GM10248 (cell line): ENCODE measurements at regions of chr2 and their contacts with region 1.

Region 1: DNA sequence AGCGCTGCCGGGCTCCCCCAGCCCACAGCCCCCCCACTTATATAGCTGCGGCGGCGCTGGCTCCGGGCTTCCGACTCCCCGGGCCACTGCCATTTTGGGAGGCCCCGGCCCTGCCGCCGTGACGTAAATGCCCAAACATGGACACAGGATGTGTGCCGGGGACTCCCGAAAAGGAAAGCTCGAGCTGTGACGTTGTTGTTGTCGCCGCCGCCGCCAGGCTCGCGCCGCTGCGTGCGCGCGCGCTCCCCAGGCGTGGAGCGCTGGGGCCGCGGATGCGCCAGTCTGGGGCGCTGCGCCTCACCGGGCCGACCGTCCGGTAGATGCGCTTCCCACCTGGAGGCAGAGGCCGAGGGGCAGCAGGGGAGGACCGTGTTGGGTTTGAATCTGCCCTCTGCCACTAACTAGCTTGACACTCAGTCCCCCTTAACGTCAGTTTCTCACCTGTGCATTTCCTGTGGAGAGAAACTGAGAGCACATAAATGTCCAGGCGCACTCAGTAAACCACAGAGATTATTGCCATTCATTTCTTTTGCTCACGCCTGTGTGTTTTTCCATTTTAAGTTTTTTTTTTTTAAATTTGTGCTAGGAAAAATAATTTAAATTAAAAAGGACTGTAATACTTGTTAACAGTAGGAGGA is at the start of gene EGR4:
- DNase-seq: peak; percentile 94
- CTCF ChIP-seq: no peak

Region 2: DNA sequence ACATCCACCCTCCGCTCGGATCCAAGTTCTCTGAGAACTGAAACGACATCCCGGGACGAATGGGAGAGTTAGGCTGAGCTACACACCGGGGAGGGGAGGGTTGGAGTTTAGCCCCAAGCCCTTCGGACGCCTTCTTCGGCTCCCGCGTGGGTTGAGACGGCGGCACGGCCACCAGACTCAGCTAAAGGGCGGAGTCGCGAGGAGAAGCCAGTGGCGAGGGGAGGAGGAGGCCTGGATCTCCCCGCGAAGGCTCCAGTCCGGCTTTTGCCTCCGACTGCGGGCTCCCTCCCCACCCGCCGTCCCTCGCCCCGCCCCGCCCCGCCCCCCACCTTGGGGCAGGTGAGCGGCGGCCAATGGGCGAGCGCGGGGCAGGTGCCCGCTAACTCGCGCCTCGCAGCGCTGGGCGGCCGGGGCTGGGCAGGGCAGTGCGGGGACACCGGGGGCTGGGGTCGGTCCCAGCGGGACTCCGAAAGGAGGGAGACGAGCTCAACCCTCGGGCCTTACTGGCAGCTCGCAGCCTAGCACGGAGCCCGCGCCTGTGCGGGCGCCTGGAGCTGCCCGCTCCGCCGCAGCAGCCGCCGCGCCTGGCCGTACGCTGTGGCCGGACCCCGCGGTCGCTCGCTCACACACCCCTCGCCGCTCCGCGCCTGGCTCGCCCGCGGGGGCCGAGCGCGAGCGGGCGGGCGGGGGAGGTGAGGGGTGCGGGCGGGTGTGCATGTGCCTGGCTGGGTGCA is 376.3 kb before region 1 on chr2 and contains the start of gene EMX1:
- CTCF ChIA-PET with region 1: no interaction called
- POLR2A ChIA-PET with region 1: no interaction called
- DNase-seq: peak; percentile 85
- CTCF ChIP-seq: no peak

Region 3: DNA sequence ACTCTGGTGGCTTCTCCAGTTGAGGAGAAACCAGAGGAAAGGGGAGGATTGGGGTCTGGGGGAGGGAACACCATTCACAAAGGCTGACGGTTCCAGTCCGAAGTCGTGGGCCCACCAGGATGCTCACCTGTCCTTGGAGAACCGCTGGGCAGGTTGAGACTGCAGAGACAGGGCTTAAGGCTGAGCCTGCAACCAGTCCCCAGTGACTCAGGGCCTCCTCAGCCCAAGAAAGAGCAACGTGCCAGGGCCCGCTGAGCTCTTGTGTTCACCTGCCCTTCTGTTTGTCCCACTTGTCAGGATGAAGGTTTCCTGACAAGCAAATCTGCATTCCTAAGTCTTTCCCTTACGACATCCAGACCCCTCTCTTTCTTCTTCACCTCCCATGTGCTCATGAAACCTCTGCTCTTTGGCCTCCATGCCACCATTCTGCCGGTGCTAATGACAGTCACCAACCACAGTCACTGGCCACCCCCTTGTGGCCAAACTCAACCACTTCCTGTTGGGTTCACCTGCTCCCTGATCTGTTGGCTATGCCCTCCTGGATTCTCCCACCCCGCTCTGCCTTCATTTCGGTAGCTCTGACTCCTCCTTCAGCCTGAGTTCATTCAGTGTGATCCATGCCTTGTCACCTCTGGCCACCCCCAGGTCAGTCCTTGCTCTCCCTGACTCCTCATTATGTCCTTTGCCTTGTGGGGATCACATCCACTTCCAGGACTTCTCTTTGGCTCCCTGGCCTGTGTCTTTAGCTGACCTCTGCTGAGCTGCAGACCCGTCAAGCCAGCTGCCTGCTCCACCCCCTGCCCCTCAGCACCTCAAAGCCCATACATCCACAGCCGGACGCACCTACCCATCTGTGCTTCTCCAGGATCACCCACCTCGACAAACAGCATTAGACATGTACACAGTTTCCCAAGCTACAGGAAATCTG is 358.7 kb before region 1 on chr2:
- CTCF ChIA-PET with region 1: no interaction called
- POLR2A ChIA-PET with region 1: no interaction called
- DNase-seq: peak; percentile 67
- CTCF ChIP-seq: peak; percentile 37

Region 4: DNA sequence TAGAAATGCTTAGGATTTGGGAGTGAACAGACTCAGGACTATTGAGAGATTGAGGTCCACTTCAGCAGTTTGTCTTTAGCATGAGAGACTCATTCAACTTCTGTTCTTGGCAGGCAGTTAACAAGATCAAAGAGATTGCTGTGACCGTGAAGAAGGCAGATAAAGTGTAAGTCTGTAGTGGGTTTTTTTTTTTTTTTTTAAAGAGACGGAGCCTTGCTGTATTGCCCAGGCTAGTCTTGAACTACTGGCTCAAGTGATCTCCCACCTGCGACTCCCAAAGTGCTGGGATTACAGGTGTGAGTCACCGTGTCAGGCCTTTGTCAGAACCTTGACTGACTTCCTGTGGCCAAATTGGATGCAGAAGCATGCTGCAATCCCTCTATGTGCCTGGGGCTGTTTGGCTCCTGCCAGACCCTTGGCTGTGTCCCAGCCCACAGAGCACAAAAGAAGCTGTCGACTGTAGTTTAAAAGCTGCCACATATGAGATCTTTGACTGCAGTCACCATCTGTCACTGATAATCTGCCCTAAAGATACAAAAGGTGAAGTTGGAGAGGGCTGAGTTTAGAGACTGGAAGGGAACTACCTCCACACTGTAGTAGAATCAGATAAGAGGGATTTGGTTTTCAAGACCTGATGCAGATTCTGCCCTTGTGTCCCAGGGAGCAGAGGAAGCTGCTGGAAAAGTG is 49.6 kb before region 1 on chr2:
- CTCF ChIA-PET with region 1: interaction called, 11 read pairs
- POLR2A ChIA-PET with region 1: no interaction called
- DNase-seq: no peak
- CTCF ChIP-seq: no peak

Region 5: GRCh38 chr2:73263540-73264333 is 29.9 kb before region 1 on chr2:
- CTCF ChIA-PET with region 1: interaction called, 15 read pairs
- POLR2A ChIA-PET with region 1: no interaction called
- DNase-seq: no peak
- CTCF ChIP-seq: no peak

Region 6: GRCh38 chr2:73282924-73283544 is 10.6 kb before region 1 on chr2:
- CTCF ChIA-PET with region 1: interaction called, 32 read pairs
- POLR2A ChIA-PET with region 1: no interaction called
- DNase-seq: no peak
- CTCF ChIP-seq: no peak

Region 7: GRCh38 chr2:73324126-73324725 is 30.6 kb after region 1 on chr2:
- CTCF ChIA-PET with region 1: interaction called, 18 read pairs
- POLR2A ChIA-PET with region 1: no interaction called
- DNase-seq: no peak
- CTCF ChIP-seq: no peak

Region 8: DNA sequence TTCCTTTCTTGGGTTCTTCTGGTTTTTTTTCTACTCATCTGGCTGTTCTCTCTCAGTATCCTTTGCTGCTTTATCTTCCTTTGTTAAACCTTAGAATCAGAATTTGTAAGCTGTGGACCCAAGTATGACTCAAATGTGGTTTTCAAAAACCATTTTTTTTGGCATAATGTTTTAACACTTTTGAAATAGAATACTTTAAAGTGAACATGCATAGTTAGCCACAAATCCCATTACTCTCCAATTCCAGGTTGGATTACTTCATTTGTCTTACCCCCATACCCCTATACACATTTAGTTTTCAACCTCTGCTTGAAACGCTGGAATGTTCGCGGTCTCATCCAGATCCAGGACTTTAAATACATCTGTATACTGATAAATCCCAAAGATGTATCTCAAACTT is 121.0 kb after region 1 on chr2:
- CTCF ChIA-PET with region 1: no interaction called
- POLR2A ChIA-PET with region 1: no interaction called
- DNase-seq: no peak
- CTCF ChIP-seq: no peak

Region 9: DNA sequence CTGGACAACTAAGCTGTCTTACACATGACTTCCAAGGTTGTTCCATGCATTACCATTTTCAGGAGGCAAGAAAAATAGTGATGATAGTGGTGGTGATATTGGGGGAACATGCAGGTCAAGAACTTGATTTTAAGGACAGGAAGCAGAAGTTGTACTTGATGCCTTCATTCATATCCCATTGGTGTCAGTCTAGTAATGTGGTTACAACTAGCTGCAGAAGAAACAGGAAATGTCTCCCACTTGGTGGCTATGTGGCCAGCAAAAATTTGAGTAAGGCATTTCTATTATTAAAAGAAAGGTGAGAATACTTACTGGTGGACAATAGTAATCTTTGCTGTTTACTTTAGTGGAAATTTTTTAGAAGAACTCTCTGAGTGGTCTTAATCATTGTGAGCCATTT is 195.4 kb after region 1 on chr2:
- CTCF ChIA-PET with region 1: no interaction called
- POLR2A ChIA-PET with region 1: no interaction called
- DNase-seq: peak; percentile 31
- CTCF ChIP-seq: no peak